Naive thymus-derived CD4-positive, alpha-beta T cell (primary cell): ENCODE measurements at regions of chr19 and their contacts with region 1.

Region 1: DNA sequence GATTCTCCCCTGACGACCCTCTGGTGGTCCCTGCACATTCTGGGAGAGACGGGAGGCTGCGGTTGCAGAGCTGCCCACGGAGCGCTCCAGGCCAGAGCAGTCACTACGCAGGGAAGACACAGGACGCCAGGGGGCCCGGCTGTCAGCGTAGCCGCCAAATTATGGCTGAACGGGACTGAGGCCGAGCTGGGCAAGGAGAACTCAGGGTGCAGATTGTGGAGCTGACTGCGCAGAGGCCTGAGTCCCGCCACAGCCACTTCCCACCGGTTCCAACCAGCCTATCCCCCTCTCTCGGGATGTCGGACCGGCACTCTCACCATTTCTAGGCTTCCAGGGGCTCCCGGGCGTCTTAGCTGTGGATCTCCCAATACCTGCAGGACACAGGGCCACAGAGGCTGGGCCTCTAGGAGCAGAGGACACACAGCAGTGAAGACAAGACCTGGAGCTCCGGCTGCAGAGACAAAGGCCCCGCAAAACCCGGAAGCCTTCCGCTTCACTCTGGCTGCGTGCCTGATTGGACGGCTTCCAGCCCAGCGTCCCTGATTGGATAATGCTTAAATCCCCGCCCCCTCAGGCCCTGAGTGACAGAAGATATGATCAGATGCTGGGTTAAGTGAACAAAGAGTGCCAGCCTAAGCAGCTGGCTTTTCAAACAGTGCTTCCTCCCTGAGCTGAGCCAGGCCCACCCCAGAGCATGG is at the start of gene ZNF737:
- DNase-seq: peak; percentile 78 to 95 (median 89)
- ATAC-seq: peak; percentile 97
- H3K4me3 ChIP-seq: peak within 1 kb of the TSS; percentile 92
- H3K4me3 Mint-ChIP-seq: peak within 1 kb of the TSS; percentile 94 to 100 (median 99)
- H3K27ac ChIP-seq: peak within 1 kb of the TSS; percentile 82
- H3K27ac Mint-ChIP-seq: peak within 1 kb of the TSS; percentile 94 to 99 (median 97)
- H3K4me1 ChIP-seq: no peaks in the 10 kb centered on the region
- H3K4me1 Mint-ChIP-seq: peaks cover 0 to 39% (median 37%) of the 10 kb centered on the region in 7 donors
- H3K27me3 ChIP-seq: no peaks in the 10 kb centered on the region
- H3K27me3 Mint-ChIP-seq: no peaks in the 10 kb centered on the region
- total RNA-seq, gene ZNF737: 13.3 to 43.2 (median 14.9) TPM

Region 2: GRCh38 chr19:20237761-20238623 is 327.5 kb before region 1 on chr19:
- CTCF ChIA-PET with region 1: no interaction called
- POLR2A ChIA-PET with region 1: interaction called, 7 read pairs
- intact Hi-C with region 1: loop called in 1 of 2 experiments (anchors 5 kb)
- DNase-seq: peak; percentile 70 to 90 (median 83)
- ATAC-seq: peak; percentile 97
- H3K4me3 ChIP-seq: peak overlapping the region; percentile 71
- H3K4me3 Mint-ChIP-seq: peak overlapping the region; percentile 83 to 98 (median 96)
- H3K27ac ChIP-seq: peak overlapping the region; percentile 63
- H3K27ac Mint-ChIP-seq: peak overlapping the region; percentile 55 to 95 (median 87)
- H3K4me1 ChIP-seq: peaks cover 0 to 4% of the 10 kb centered on the region in 2 donors
- H3K4me1 Mint-ChIP-seq: peaks cover 5 to 12% (median 10%) of the 10 kb centered on the region in 7 donors
- H3K27me3 ChIP-seq: no peaks in the 10 kb centered on the region
- H3K27me3 Mint-ChIP-seq: no peaks in the 10 kb centered on the region

Region 3: GRCh38 chr19:20661150-20661819 is 95.8 kb after region 1 on chr19 and contains the start of gene ZNF626:
- CTCF ChIA-PET with region 1: no interaction called
- POLR2A ChIA-PET with region 1: interaction called, 23 read pairs
- intact Hi-C with region 1: loop called in 1 of 2 experiments (anchors 2 kb)
- DNase-seq: peak; percentile 66 to 92 (median 87)
- ATAC-seq: peak; percentile 99
- H3K4me3 ChIP-seq: peak within 1 kb of the TSS; percentile 89
- H3K4me3 Mint-ChIP-seq: peak within 1 kb of the TSS; percentile 83 to 97 (median 92)
- H3K27ac ChIP-seq: peak within 1 kb of the TSS; percentile 91
- H3K27ac Mint-ChIP-seq: peak within 1 kb of the TSS; percentile 86 to 97 (median 95)
- H3K4me1 ChIP-seq: peaks cover 0 to 6% of the 10 kb centered on the region in 2 donors
- H3K4me1 Mint-ChIP-seq: peaks cover 0 to 54% (median 47%) of the 10 kb centered on the region in 7 donors
- H3K27me3 ChIP-seq: no peaks in the 10 kb centered on the region
- H3K27me3 Mint-ChIP-seq: no peaks in the 10 kb centered on the region
- total RNA-seq, gene ZNF626: 2.2 to 20.0 (median 12.4) TPM

Region 4: GRCh38 chr19:21082011-21082975 is 516.8 kb after region 1 on chr19 and contains the start of gene ZNF714:
- CTCF ChIA-PET with region 1: no interaction called
- POLR2A ChIA-PET with region 1: no interaction called
- intact Hi-C with region 1: loop called in 1 of 2 experiments (anchors 2 kb)
- DNase-seq: peak; percentile 55 to 90 (median 80)
- ATAC-seq: peak; percentile 100
- H3K4me3 ChIP-seq: peak within 1 kb of the TSS; percentile 92
- H3K4me3 Mint-ChIP-seq: peak within 1 kb of the TSS; percentile 91 to 100 (median 99)
- H3K27ac ChIP-seq: peak within 1 kb of the TSS; percentile 74
- H3K27ac Mint-ChIP-seq: peak within 1 kb of the TSS; percentile 85 to 99 (median 95)
- H3K4me1 ChIP-seq: no peaks in the 10 kb centered on the region
- H3K4me1 Mint-ChIP-seq: peaks cover 3 to 24% (median 18%) of the 10 kb centered on the region in 7 donors
- H3K27me3 ChIP-seq: no peaks in the 10 kb centered on the region
- H3K27me3 Mint-ChIP-seq: no peaks in the 10 kb centered on the region
- total RNA-seq, gene ZNF714: 7.4 to 22.3 (median 13.3) TPM